Activated naive CD4-positive, alpha-beta T cell treated with anti-CD3 and anti-CD28 coated beads for 36 hours (primary cell): ENCODE measurements at regions of chrX and their contacts with region 1.

Region 1: GRCh38 chrX:19682712-19683331 is 167.5 kb upstream of the MAP3K15 start:
- DNase-seq: peak; percentile 88
- H3K4me3 Mint-ChIP-seq: peak overlapping the region; percentile 47
- H3K27ac Mint-ChIP-seq: peak overlapping the region; percentile 90
- H3K4me1 Mint-ChIP-seq: peaks cover 72% of the 10 kb centered on the region
- H3K27me3 Mint-ChIP-seq: no peaks in the 10 kb centered on the region

Region 2: GRCh38 chrX:19554786-19555185 is 128.0 kb before region 1 on chrX:
- CTCF ChIA-PET with region 1: no interaction called
- intact Hi-C with region 1: loop called (anchors 2 kb)
- DNase-seq: peak; percentile 55
- H3K4me3 Mint-ChIP-seq: no peak overlapping the region
- H3K27ac Mint-ChIP-seq: peak overlapping the region; percentile 81
- H3K4me1 Mint-ChIP-seq: peaks cover 58% of the 10 kb centered on the region
- H3K27me3 Mint-ChIP-seq: no peaks in the 10 kb centered on the region

Region 3: GRCh38 chrX:19625612-19626011 is 57.2 kb before region 1 on chrX:
- CTCF ChIA-PET with region 1: no interaction called
- intact Hi-C with region 1: loop called (anchors 1 kb)
- DNase-seq: peak; percentile 68
- H3K4me3 Mint-ChIP-seq: no peak overlapping the region
- H3K27ac Mint-ChIP-seq: peak overlapping the region; percentile 90
- H3K4me1 Mint-ChIP-seq: peaks cover 65% of the 10 kb centered on the region
- H3K27me3 Mint-ChIP-seq: no peaks in the 10 kb centered on the region

Region 4: DNA sequence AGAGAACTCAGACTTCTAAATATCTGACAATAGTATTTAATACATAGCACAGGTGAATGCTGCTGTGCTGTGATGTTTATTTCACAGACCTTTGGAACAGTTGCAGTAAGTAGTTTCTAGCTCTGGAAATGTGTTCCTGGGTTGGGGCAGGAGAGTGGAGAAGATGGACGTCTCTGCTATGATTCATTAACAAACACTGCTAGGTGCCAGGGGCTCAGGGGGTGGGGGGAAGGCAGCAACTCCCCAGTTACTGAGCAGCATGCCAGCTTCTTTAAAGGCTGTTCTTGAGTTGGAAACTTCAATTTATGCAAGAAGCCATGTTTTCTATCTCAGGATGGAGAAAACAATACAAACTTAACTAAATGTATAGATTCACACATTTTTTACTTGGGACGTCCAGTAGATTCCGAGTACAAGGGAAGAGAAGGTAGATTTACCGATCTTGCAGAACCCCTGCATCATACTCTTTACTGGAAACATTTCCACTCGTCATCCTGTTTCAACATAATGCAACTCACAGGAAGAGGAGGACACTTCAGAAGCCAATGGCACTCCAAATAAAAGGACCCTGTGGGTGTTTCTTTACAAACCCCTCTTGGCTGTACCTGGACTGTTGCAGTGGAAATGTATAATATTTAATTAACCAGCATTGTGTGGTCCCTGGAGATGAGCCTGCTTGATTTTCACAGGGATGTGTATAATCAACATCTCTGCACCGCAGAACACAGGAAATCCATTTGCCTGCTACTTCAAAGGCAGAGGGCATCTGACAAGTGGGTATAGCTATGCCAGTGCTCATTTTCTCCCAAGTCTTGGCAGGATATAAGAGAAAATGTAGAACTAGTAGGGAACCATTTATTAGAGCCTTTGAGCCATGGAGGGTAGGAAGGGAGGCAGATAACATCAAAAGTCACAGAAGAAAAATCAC is 33.2 kb after region 1 on chrX:
- CTCF ChIA-PET with region 1: no interaction called
- intact Hi-C with region 1: loop called (anchors 1 kb)
- DNase-seq: peak; percentile 19
- H3K4me3 Mint-ChIP-seq: no peak overlapping the region
- H3K27ac Mint-ChIP-seq: peak overlapping the region; percentile 73
- H3K4me1 Mint-ChIP-seq: peaks cover 53% of the 10 kb centered on the region
- H3K27me3 Mint-ChIP-seq: no peaks in the 10 kb centered on the region

Region 5: DNA sequence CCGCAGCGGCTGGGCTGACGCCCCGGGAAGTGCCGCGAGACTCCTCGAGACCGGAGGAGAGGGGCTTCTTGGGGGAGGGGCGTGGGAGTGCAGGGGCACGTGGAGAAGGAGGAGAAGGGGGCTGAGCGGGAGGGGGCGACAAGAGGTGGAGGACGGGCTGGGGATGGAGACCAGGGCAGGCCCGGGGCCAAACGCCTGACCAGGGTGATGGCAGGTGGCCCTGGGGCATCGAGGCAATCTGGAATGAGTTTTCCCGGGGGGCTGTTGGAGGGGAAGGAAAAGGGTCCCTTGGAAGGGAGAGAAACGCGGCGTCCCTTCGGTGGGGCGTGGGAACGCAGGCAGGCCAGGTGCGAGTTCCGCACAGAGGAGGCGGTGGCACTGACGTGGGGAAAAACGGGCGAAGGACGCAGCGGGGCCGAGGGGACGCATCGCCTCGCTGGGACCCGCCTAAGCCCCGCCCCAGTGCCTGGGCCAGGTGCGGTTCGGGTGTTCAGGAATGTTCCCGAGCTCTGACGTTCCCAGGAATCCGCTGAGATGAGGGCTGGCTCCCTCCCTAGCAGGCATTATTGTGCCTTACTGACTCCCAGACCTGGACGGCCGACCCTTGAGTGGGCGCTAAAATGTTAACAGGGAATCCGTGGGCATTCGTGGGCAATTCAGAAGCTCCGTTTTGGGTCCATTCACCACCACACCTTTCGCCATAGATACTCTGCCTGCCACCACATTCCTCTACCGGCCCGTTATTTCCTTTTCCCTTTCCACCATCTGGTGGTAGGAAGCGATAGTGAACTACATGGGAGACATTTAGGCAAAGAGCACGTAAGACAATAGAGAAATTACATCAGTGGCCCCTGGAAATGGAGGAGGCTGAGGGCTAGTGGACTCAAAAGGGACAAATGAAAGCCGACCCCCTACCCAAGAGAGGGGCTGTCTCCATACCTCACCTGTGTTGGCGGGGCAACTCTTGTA is 205.4 kb after region 1 on chrX:
- CTCF ChIA-PET with region 1: no interaction called
- intact Hi-C with region 1: loop called (anchors 1 kb)
- DNase-seq: peak; percentile 58
- H3K4me3 Mint-ChIP-seq: peak overlapping the region; percentile 78
- H3K27ac Mint-ChIP-seq: peak overlapping the region; percentile 79
- H3K4me1 Mint-ChIP-seq: peaks cover 42% of the 10 kb centered on the region
- H3K27me3 Mint-ChIP-seq: no peaks in the 10 kb centered on the region